Mucosa of descending colon (tissue), 3 donors: ENCODE measurements at regions of chr11 and their contacts with region 1.

Region 1: DNA sequence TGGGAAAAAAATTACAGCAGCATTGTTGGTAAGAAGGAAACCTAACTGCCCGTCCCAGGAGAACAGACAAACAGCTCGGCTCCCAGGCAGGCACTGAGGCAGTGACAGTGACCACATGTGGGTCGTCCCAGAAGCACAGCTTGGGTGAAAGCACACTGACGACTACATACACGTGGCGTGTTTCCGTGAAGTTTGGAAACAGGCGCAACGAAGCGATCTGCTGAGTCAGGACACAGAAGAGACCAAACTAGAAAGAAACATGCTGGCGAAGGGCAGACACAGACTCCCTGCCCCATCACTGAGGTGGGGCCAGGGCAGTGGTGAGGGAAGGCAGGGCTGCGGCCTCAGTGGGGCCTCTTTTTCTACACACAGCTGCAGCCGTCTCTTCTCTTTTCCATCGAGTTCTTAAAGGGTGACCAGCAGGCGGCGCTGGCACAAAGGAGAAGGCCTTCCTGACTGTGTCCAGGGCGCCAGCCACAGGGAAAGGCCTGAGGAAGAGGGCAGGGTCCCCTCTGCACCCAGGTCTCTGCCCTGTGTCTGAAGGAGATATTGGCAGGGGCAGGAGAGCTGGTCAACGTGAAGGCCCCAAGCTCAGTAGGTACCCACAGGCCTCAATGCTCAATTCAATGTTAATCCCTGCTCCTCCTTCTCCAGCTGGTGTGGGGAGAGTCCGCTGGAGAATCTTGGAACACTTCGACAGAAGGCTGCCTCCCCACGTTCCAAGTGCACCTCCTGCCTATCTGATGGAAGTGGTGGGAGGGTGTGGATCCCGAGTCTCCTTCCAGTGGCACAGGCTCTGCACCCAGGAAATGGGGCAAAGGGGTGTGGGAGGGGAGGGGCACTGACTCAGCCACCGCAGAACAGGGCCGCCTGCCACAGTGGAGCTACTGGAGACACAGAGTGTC is 19.9 kb downstream of the CARS1 start:
- DNase-seq: peak; percentile 73 to 90 (median 86)
- ATAC-seq: peak; percentile 89
- H3K4me3 ChIP-seq: no peak overlapping the region
- H3K4me1 ChIP-seq: no peaks in the 10 kb centered on the region
- CTCF ChIP-seq: peak; percentile 39

Region 2: DNA sequence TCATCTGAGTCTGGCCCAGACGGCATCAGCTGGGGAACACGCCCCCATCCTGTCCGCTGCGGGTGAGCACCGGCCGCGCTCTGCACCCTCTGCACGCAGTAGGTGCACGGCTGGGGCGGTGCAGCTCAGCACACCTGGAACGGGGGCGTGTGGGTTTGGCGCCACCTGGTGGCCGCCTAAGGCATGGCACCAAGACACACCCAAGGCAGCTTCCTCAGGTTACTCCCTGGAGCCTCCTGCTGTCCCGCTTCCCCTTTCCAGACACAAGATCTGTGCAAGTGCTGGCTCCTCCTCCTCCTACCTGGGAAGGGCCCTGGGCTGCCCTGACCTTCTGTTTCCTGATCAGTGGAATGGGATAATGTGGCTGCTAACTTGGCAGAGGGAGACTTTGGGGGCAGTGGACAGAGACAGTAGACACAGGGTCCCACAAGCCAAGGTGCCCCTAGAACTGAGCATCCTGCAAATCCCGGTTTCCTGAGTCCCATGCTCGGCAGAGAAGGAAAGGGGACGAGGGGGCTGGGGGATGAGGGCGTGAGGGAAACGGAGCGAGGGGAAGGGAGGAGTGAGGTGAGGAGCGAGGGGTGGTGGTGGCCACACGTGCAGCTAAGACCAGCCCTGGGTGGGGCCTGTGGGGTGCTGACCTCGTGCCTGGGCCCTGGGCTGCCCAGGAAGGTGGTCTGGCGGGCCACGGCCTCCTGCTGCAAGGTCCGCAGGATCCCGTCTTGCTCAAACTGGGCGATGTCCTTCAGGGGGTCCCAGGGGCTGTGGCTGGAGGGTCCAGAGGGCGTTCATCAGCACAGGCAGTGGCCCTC is 54.7 kb after region 1 on chr11:
- intact Hi-C with region 1: loop called (anchors 5 kb)
- DNase-seq: peak; percentile 79 to 87 (median 86)
- ATAC-seq: peak; percentile 94
- H3K4me3 ChIP-seq: no peak overlapping the region
- H3K4me1 ChIP-seq: no peaks in the 10 kb centered on the region
- CTCF ChIP-seq: peak; percentile 98